BJ (cell line): ENCODE measurements at regions of chr5 and their contacts with region 1.

Region 1: DNA sequence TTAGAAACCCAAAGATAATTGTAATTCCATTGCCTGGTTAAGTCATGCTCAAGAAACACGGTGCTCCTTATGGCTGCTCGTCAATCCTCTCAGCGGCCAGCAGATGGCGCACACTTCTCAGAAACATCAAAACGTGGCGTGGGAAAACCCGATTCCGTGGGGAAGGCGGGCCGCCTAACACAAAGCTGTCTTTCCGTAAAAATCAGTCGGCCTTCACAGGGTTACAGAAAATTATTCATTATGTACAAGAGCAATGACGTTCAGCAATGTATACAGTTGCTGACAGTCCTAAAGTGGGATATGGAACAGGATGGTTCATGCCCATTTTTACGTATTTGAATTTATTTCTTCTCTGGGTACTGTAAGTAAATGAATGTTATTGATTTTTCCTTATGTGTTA is 83.5 kb downstream of the PDE4D start:
- DNase-seq: no peak
- H3K4me3 ChIP-seq: no peak overlapping the region
- H3K27me3 ChIP-seq: peaks cover 16% of the 10 kb centered on the region
- CTCF ChIP-seq: peak; percentile 91

Region 2: DNA sequence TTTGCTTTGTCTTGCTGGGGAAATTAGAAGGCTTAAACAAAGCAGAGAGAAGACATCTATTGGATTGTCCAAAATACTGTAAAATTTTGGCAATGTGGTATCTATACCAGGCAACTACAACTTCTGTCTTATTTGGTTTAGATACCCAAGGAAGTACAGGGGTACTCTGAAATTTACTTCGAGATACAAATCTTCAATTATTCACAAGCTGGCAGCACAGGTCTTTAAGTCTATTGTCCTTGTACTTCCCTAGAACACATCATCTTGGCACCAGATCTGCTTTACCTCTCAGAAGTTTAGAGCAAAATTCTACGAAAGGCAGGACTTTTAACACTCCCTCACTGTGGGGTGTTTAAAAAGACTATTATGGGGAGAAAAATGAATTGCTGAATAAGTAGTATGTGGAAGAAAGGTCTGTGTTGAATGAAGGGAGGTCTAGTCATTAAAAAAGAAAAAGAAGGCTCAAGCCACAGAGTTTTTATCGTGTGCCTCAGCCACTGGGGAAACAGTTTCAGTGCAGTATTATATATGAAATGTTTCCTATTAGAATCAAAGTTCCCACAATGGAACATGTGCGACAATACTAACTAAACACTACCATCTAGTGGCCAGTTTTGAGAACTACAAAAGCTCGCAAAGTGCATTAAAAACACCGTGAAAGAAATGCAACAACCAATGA is 10.2 kb before region 1 on chr5:
- CTCF ChIA-PET with region 1: interaction called, 14 read pairs
- POLR2A ChIA-PET with region 1: no interaction called
- DNase-seq: no peak
- H3K4me3 ChIP-seq: no peak overlapping the region
- H3K27me3 ChIP-seq: peaks cover under 1% of the 10 kb centered on the region; the same call in 1 of the 2 replicates
- CTCF ChIP-seq: peak; percentile 60

Region 3: DNA sequence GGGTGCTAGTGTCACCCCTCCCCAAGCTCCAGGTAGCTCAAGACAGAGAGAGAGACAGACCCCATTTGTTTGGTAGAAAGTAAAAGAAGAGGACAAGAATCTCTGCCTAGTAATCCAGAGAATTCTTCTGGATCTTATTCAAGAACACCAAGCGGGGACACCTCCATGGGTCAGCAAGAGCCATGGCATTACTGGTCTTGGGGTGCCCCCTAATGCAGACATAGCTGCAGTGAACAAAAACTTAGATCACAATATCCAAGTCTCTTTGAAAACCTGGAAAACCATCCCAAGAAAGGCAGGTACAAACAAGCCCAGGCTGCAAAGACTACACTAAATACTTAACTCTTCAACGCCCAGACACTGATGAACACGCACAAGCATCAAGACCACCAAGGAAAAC is 113.4 kb after region 1 on chr5:
- CTCF ChIA-PET with region 1: interaction called, 47 read pairs
- POLR2A ChIA-PET with region 1: no interaction called
- DNase-seq: no peak
- H3K4me3 ChIP-seq: no peak overlapping the region
- H3K27me3 ChIP-seq: no peaks in the 10 kb centered on the region
- CTCF ChIP-seq: peak; percentile 51

Region 4: GRCh38 chr5:60161340-60161934 is 351.4 kb after region 1 on chr5:
- CTCF ChIA-PET with region 1: interaction called, 15 read pairs
- POLR2A ChIA-PET with region 1: no interaction called
- DNase-seq: no peak
- H3K4me3 ChIP-seq: no peak overlapping the region
- H3K27me3 ChIP-seq: no peaks in the 10 kb centered on the region
- CTCF ChIP-seq: peak; percentile 64

Region 5: DNA sequence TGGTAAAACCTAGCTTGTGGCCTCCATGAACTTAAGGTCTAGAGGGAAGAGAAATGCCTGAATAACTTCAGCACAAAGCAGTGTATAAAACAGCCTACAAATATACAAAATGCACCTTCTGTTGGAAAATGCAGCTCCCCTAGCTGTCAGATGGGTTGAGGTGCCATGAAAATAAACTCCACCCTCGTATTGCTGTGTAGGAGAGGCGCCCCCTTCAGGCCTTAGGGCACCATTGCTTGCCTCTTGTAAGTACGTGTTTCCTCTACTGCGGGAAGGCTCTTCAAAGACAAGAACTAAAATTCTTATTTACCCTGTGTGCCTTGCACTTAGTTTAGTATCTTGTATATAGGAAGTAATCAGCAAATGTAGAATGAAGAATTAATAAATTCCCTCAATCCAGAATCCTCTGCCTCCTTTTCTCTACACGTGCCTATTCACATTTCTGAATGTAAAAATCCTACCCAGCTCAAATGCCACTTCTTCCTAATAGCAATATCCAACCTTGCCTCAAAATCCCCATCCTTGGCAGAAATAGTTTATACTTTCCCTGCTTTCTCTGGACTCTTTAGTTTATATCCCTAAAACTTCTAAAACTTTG is 477.2 kb after region 1 on chr5:
- CTCF ChIA-PET with region 1: interaction called, 32 read pairs
- POLR2A ChIA-PET with region 1: no interaction called
- DNase-seq: no peak
- H3K4me3 ChIP-seq: no peak overlapping the region
- H3K27me3 ChIP-seq: no peaks in the 10 kb centered on the region
- CTCF ChIP-seq: peak; percentile 63

Region 6: DNA sequence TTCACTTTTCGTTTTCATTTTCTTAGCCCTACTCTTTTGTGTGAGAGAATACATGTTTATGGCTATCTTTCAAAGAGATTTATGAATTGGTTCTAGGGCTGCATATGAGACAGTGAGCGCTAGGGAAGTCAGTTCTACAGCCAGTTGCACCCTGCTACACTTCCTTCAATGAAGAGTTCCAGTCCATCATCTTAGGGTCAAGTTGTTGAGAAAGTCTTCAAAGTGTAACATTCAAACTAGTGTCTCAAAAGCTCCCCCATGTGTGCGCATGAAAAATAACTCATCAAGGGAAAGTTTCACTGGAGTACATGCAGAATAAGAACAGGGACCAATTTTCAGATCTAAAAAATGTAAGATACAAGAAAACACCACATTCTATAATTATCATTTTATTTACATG is 572.7 kb after region 1 on chr5:
- CTCF ChIA-PET with region 1: interaction called, 36 read pairs
- POLR2A ChIA-PET with region 1: no interaction called
- DNase-seq: no peak
- H3K4me3 ChIP-seq: no peak overlapping the region
- H3K27me3 ChIP-seq: no peaks in the 10 kb centered on the region
- CTCF ChIP-seq: peak; percentile 44

Region 7: GRCh38 chr5:60668686-60669304 is 858.8 kb after region 1 on chr5:
- CTCF ChIA-PET with region 1: interaction called, 17 read pairs
- POLR2A ChIA-PET with region 1: no interaction called
- DNase-seq: no peak
- H3K4me3 ChIP-seq: no peak overlapping the region
- H3K27me3 ChIP-seq: no peaks in the 10 kb centered on the region
- CTCF ChIP-seq: peak; percentile 53

Region 8: GRCh38 chr5:61052870-61053269 is 1242.8 kb after region 1 on chr5:
- CTCF ChIA-PET with region 1: no interaction called
- POLR2A ChIA-PET with region 1: no interaction called
- DNase-seq: peak; percentile 59
- H3K4me3 ChIP-seq: no peak overlapping the region
- H3K27me3 ChIP-seq: no peaks in the 10 kb centered on the region
- CTCF ChIP-seq: no peak